H1 (cell line): ENCODE measurements at regions of chr6 and their contacts with region 1.

Region 1: DNA sequence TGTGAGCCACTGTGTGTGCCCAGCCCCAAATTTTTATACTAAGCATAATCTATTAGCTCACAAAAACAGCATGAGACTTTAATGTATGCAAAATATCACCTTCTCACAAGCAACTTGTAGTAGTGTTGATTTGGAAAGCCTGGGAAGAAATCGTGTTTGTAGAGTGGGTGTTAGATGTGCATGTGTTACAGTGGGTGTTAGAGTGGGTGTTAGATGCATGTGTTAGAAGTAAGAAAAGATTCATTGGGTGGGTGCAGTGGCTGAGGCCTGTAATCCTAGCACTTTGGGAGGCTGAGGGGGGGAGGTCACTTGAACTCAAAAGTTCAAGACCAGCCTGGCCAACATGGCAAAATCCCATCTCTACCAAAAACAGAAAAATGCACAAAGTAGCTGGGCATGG is 6.3 kb upstream of the SCAF8 start:
- DNase-seq: no peak
- H3K4me3 ChIP-seq: no peak overlapping the region
- H3K27ac ChIP-seq: no peak overlapping the region
- H3K4me1 ChIP-seq: peaks cover 0 to 3% (median 1%) of the 10 kb centered on the region in 4 experiments; a peak in 2 of 7 replicates
- H3K27me3 ChIP-seq: no peaks in the 10 kb centered on the region
- CTCF ChIP-seq: no peak
- EP300 ChIP-seq: no peak
- POLR2A ChIP-seq: no peak
- RAD21 ChIP-seq: no peak

Region 2: GRCh38 chr6:154638369-154638768 is 88.5 kb before region 1 on chr6:
- CTCF ChIA-PET with region 1: no interaction called
- POLR2A ChIA-PET with region 1: no interaction called
- DNase-seq: no peak
- H3K4me3 ChIP-seq: no peak overlapping the region
- H3K27ac ChIP-seq: no peak overlapping the region
- H3K4me1 ChIP-seq: no peaks in the 10 kb centered on the region
- H3K27me3 ChIP-seq: no peaks in the 10 kb centered on the region
- CTCF ChIP-seq: no peak
- EP300 ChIP-seq: no peak
- POLR2A ChIP-seq: no peak
- RAD21 ChIP-seq: no peak

Region 3: DNA sequence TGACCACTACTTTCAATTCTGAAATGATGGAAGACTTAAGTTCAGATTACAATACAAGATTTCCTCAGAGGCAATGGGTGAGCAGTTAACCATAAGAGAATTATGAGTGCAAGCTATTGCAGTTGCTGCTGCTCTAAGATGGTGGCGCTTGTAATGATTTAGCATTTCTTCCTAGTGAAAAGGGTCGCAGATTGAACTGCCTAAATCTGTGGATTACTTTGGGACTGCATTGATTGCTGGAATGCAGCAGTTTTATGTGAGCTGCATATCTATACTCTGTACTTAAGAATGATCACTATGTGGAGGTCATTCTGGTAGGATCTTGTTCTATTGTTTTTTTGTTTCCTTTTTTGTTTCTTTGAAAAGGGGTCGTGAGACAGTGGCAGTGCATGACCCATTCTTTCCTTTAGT is 11.7 kb after region 1 on chr6:
- CTCF ChIA-PET with region 1: interaction called, 3 read pairs
- POLR2A ChIA-PET with region 1: interaction called, 10 read pairs
- DNase-seq: no peak
- H3K4me3 ChIP-seq: peak overlapping the region in 1 of 4 experiments; percentile 10; a peak in 2 of 8 replicates
- H3K27ac ChIP-seq: no peak overlapping the region
- H3K4me1 ChIP-seq: peaks cover 2 to 6% (median 4%) of the 10 kb centered on the region in 4 experiments
- H3K27me3 ChIP-seq: no peaks in the 10 kb centered on the region
- CTCF ChIP-seq: no peak
- EP300 ChIP-seq: no peak
- POLR2A ChIP-seq: no peak
- RAD21 ChIP-seq: no peak